ENCODE measurements at regions of chrX and their contacts with region 1.

Region 1: DNA sequence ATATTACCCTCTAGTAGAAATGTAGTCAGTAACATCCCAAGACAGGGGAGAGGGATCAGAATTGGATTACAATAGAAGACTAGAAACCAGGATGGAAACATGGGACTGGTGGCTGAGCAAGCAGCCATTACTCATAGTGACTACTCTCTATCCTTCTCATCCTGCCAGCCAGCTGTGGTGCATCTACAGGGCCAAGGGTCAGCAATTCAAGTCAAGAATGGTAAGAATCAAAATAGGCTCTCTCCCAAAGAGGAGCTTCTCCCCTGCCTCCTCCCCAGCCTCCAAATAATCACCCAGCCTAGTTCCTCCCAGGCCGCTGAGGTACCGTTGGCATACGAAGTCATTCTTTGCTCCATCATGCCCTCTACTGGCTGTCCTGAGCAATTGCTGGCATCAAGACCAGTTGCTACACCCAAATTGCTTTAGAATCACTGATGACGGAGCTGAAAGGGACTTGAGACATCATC is 19.4 kb downstream of the AWAT2 start:
- DNase-seq: peak; percentile 75
- H3K4me3 ChIP-seq: no peak overlapping the region
- H3K27ac ChIP-seq: no peak overlapping the region
- H3K4me1 ChIP-seq: no peaks in the 10 kb centered on the region
- H3K27me3 ChIP-seq: no peaks in the 10 kb centered on the region
- CTCF ChIP-seq: peak; percentile 86

Region 2: DNA sequence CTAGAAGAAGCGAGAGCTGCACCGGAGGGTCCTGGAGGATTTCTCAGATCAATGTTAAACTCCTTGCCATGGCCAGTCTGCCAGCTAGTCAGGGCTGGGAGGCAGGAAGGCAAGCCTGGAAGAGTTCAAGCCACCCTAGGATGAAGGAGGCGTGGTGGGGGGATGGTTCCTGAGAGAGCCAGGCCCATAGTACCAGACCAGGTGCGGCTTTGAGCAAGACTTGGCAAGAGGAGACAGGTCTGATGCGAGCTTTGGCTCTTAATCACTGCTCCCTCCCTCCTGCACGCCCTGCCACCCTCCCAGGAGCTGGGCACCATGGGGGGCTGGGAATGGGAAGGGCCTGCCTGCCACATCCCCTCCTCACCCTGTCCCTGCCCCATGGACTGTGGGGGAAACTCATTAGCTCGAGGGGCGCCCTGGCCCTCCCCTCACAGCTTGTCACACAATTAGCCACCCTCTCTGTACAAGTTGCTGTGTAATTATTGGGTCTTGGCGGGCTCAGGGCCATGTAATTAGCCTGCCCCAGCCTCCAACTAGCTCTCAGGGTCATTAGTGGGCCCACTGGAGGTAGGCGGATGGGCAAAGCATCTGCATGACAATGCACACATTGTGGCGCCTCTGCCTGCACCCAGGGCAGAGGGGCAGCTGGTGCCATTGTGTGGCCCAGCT is 1151.2 kb before region 1 on chrX:
- CTCF ChIA-PET with region 1: no interaction called
- POLR2A ChIA-PET with region 1: no interaction called
- intact Hi-C with region 1: no loop called
- DNase-seq: no peak
- H3K4me3 ChIP-seq: no peak overlapping the region
- H3K27ac ChIP-seq: no peak overlapping the region
- H3K4me1 ChIP-seq: no peaks in the 10 kb centered on the region
- H3K27me3 ChIP-seq: peaks cover 4% of the 10 kb centered on the region
- CTCF ChIP-seq: no peak

Region 3: DNA sequence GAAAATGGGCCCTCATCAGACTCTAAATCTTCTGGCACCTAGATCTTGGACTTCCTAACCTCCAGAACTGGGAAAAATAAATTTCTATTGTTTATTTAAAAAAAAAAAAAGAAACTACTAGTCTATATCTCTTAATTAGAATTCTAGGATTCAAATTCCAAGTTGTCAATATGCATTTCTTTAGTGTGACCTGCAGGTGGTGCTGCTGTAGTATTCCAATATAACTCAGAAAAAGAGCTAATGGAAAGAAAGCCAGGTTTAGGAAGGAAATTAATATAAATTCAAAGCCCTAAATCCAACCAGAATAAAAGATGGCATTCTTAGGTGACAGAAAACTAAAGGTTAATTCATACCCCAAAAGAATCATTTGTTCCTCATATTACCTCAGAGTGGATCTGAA is 606.2 kb before region 1 on chrX:
- CTCF ChIA-PET with region 1: no interaction called
- POLR2A ChIA-PET with region 1: no interaction called
- intact Hi-C with region 1: loop called (anchors 10 kb)
- DNase-seq: peak; percentile 37
- H3K4me3 ChIP-seq: no peak overlapping the region
- H3K27ac ChIP-seq: no peak overlapping the region
- H3K4me1 ChIP-seq: no peaks in the 10 kb centered on the region
- H3K27me3 ChIP-seq: peaks cover 8% of the 10 kb centered on the region
- CTCF ChIP-seq: peak; percentile 61

Region 4: GRCh38 chrX:69538321-69538876 is 491.9 kb before region 1 on chrX:
- CTCF ChIA-PET with region 1: interaction called, 5 read pairs
- POLR2A ChIA-PET with region 1: no interaction called
- intact Hi-C with region 1: loop called (anchors 1 kb)
- DNase-seq: peak; percentile 68
- H3K4me3 ChIP-seq: peak overlapping the region; percentile 28
- H3K27ac ChIP-seq: no peak overlapping the region
- H3K4me1 ChIP-seq: no peaks in the 10 kb centered on the region
- H3K27me3 ChIP-seq: no peaks in the 10 kb centered on the region
- CTCF ChIP-seq: peak; percentile 84

Region 5: DNA sequence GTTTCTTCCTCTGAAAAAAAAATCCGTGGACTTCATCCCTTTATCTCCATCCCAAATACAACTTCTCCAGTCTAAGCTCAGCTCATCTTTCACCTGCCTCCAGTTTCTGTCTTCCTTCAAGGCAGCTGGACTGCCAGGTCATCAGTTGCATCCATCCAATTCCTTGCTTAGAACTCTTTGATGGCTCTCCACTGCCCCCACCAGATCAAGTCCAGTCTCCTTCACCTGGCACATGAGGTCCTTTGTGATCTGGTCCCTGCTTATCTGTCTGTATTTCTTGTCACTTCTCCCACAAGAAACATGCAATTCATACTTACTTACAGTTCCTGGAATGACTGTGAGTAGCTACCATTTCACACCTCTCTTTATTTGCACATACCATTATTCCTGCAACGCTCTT is 65.7 kb after region 1 on chrX:
- CTCF ChIA-PET with region 1: interaction called, 4 read pairs
- POLR2A ChIA-PET with region 1: no interaction called
- intact Hi-C with region 1: loop called (anchors 1 kb)
- DNase-seq: no peak
- H3K4me3 ChIP-seq: no peak overlapping the region
- H3K27ac ChIP-seq: no peak overlapping the region
- H3K4me1 ChIP-seq: no peaks in the 10 kb centered on the region
- H3K27me3 ChIP-seq: no peaks in the 10 kb centered on the region
- CTCF ChIP-seq: peak; percentile 20; the same call in 1 of the 2 replicates

Measured in A673 (cell line).